ENCODE measurements at regions of chr19 and their contacts with region 1.

Region 1: DNA sequence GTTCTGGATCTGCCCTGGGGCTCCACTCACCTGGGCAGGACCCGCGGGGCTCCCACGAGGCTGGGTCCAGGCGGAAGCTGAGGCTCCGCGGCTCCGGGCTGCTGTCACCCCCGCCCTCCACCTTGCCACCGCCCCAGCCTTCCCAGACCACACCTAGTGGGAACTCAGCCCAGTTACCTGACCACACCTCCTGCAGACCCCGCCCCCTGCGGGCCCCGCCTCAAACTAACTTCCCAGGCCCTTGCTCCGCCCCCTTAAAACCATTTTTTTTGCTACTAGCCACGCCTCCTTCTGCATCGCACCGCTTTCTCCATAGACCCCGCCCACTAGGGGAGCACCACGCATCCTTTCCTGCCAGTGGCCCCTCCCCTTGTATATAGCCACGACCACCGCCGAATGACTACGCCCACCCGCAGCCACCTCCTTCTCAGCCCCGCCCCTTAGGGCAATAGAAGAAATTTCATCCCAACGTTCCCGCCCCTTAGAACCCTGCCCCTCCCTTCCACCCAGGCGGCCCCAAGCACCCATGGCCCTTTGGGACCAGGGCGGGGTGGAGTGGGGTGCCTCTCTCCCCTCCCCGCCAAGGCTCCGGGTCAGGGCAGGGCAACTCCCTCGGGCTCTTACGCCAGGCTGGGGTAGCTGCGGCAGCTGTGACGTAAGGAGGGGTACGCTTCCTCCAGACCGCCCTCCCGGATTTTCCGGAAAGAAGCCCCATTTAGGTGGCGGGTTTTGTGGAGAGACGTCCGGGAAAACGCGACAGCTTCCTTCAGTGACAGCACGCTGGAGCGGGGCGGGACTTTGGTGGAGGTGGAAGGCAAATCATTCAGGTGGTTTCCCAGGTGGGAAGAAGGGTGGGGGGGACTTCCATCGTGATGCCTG is at the start of gene SH2D3A:
- DNase-seq: peak; percentile 96
- H3K4me3 Mint-ChIP-seq: peak within 1 kb of the TSS; percentile 76
- H3K27ac Mint-ChIP-seq: peak within 1 kb of the TSS; percentile 74
- H3K4me1 Mint-ChIP-seq: peaks cover 10% of the 10 kb centered on the region
- H3K27me3 Mint-ChIP-seq: no peaks in the 10 kb centered on the region
- CTCF ChIP-seq: no peak
- total RNA-seq, gene SH2D3A: 28.5 and 76.7 TPM in 2 replicates

Region 2: GRCh38 chr19:6680151-6680694 is 87.4 kb before region 1 on chr19:
- CTCF ChIA-PET with region 1: no interaction called
- POLR2A ChIA-PET with region 1: no interaction called
- intact Hi-C with region 1: no loop called
- DNase-seq: no peak
- H3K4me3 Mint-ChIP-seq: no peak overlapping the region
- H3K27ac Mint-ChIP-seq: no peak overlapping the region
- H3K4me1 Mint-ChIP-seq: peaks cover 28% of the 10 kb centered on the region
- H3K27me3 Mint-ChIP-seq: no peaks in the 10 kb centered on the region
- CTCF ChIP-seq: no peak

Region 3: GRCh38 chr19:6737284-6738046 is 30.1 kb before region 1 on chr19 and contains the start of gene GPR108:
- CTCF ChIA-PET with region 1: interaction called, 4 read pairs
- POLR2A ChIA-PET with region 1: interaction called, 88 read pairs
- intact Hi-C with region 1: loop called (anchors 1 kb)
- DNase-seq: peak; percentile 100
- H3K4me3 Mint-ChIP-seq: peak within 1 kb of the TSS; percentile 88
- H3K27ac Mint-ChIP-seq: peak within 1 kb of the TSS; percentile 83
- H3K4me1 Mint-ChIP-seq: peaks cover 27% of the 10 kb centered on the region
- H3K27me3 Mint-ChIP-seq: no peaks in the 10 kb centered on the region
- CTCF ChIP-seq: no peak
- total RNA-seq, gene GPR108: 115 and 124 TPM in 2 replicates

Region 4: DNA sequence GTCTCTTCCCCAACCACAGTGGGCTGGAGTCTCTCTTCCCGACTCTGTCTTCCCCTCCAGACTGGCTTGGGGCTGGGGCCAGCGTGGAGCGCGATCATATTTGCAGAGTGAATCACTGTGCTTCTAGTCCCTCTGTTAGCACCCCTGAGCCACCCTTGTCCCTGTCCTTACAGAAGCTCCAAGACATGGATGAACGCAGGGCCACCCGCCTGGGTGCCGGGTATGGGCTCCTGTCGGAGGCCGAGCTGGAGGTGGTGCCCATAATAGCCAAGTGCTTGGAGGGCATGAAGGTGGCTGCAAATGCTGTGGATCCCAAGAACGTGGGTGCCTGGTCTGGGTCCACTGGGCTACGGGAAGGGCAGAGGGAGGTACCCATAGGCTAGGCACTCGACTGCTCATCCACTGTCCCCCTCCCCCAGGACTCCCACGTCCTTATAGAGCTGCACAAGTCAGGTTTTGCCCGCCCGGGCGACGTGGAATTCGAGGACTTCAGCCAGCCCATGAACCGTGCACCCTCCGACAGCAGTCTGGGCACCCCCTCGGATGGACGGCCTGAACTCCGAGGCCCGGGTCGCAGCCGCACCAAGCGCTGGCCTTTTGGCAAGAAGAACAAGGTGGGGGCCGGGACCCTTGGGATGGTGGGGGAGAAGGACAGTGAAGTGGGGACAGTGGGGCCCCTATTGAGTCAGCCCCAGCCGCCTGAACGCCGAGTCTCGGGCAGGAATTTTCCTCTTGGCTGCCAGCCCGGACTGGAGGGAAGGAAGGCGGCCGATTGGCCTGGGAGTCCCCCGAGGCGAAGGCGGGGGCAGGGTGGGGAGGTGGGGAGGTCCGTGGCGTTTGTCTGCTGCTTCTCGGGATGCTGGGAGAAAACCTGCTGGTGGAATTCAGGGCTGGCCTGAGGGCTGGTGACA is 23.0 kb before region 1 on chr19:
- CTCF ChIA-PET with region 1: interaction called, 5 read pairs
- POLR2A ChIA-PET with region 1: interaction called, 88 read pairs
- intact Hi-C with region 1: no loop called
- DNase-seq: peak; percentile 98
- H3K4me3 Mint-ChIP-seq: peak overlapping the region; percentile 60
- H3K27ac Mint-ChIP-seq: peak overlapping the region; percentile 28
- H3K4me1 Mint-ChIP-seq: peaks cover 28% of the 10 kb centered on the region
- H3K27me3 Mint-ChIP-seq: no peaks in the 10 kb centered on the region
- CTCF ChIP-seq: no peak

Region 5: DNA sequence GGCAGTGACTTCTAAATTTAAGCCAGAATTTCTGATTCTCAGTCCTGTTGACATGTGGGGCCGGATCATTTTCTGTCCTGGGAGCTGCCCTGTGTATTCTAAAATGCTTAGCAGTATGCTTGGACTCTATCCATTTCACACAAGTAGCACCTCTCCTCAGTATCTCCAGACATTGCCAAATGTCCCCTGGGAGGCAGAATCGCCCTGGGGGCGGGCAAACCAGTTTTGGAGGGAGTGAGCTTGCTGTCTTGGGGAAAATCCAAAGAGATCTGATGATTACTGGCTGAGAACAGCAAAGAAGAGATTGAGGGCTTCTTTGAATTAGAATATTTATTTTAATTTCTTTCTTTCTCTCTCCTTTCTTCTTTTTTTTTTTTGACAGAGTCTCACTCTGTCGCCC is 21.3 kb after region 1 on chr19:
- CTCF ChIA-PET with region 1: no interaction called
- POLR2A ChIA-PET with region 1: no interaction called
- intact Hi-C with region 1: no loop called
- DNase-seq: no peak
- H3K4me3 Mint-ChIP-seq: no peak overlapping the region
- H3K27ac Mint-ChIP-seq: no peak overlapping the region
- H3K4me1 Mint-ChIP-seq: no peaks in the 10 kb centered on the region
- H3K27me3 Mint-ChIP-seq: peaks cover 19% of the 10 kb centered on the region
- CTCF ChIP-seq: no peak